PC-9 (cell line): ENCODE measurements at regions of chr2 and their contacts with region 1.

Region 1: DNA sequence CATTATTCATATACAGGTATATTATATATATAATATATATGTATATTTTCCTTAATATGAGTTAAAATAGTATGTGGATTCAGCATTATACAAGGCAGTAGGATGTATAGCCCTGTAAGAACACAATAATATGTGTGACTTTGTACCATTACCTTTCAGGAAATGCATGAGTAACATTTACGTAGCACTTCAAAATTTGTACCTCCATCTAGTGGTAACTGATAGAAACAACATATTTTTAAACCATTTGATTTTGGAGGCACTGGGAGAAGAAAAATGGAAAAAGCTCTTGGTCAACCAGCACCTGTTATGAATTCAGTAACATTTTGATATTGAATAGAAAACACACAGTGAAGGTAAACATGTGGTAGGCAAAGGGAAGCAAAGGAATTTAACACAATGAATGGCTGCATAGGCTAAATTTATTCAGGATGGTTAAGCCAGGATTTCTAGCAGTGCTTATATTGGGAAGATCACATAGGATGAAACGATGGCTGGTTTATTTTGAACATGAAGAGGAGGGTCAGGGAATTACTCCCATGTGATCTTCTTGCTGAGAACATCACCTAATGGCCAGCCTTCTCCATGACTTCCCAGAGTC is 565.5 kb downstream of the CCDC85A start:
- DNase-seq: no peak
- H3K4me3 ChIP-seq: no peak overlapping the region
- H3K27ac ChIP-seq: no peak overlapping the region
- H3K4me1 ChIP-seq: no peaks in the 10 kb centered on the region
- H3K27me3 ChIP-seq: no peaks in the 10 kb centered on the region
- CTCF ChIP-seq: peak; percentile 69

Region 2: DNA sequence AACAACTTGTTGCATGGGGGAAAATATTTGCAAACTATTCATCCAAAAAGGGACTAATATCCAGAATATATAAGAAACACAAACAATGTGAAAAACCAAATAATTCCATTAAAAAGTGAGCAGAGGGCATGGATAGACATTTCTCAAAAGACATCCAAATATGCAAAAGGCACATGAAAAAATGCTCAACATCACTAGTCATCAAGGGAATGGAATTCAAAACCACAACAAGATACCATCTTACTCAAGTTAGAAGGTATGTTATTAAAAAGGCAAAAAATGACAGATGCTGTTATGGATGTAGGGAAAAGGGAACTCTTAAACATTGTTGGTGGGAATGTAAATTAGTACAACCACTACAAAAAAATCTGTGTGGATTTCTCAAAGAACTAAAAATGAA is 169.0 kb before region 1 on chr2:
- CTCF ChIA-PET with region 1: no interaction called
- POLR2A ChIA-PET with region 1: no interaction called
- intact Hi-C with region 1: loop called (anchors 10 kb)
- DNase-seq: no peak
- H3K4me3 ChIP-seq: no peak overlapping the region
- H3K27ac ChIP-seq: no peak overlapping the region
- H3K4me1 ChIP-seq: no peaks in the 10 kb centered on the region
- H3K27me3 ChIP-seq: no peaks in the 10 kb centered on the region
- CTCF ChIP-seq: no peak

Region 3: GRCh38 chr2:56656826-56657225 is 92.4 kb before region 1 on chr2:
- CTCF ChIA-PET with region 1: no interaction called
- POLR2A ChIA-PET with region 1: interaction called, 10 read pairs
- intact Hi-C with region 1: no loop called
- DNase-seq: no peak
- H3K4me3 ChIP-seq: no peak overlapping the region
- H3K27ac ChIP-seq: no peak overlapping the region
- H3K4me1 ChIP-seq: no peaks in the 10 kb centered on the region
- H3K27me3 ChIP-seq: no peaks in the 10 kb centered on the region
- CTCF ChIP-seq: no peak